Upper lobe of right lung (tissue), 1 donor: ENCODE measurements at regions of chr3 and their contacts with region 1.

Region 1: GRCh38 chr3:113287803-113288648 is 76.7 kb downstream of the BOC start:
- DNase-seq: no peak
- ATAC-seq: peak; percentile 76
- H3K4me3 ChIP-seq: no peak overlapping the region
- H3K27ac ChIP-seq: no peak overlapping the region
- H3K4me1 ChIP-seq: no peaks in the 10 kb centered on the region
- H3K27me3 ChIP-seq: no peaks in the 10 kb centered on the region
- CTCF ChIP-seq: peak; percentile 99

Region 2: GRCh38 chr3:113051302-113051711 is 236.7 kb before region 1 on chr3:
- intact Hi-C with region 1: loop called (anchors 10 kb)
- DNase-seq: peak; percentile 71
- ATAC-seq: peak; percentile 97
- H3K4me3 ChIP-seq: no peak overlapping the region
- H3K27ac ChIP-seq: no peak overlapping the region
- H3K4me1 ChIP-seq: peaks cover 17% of the 10 kb centered on the region
- H3K27me3 ChIP-seq: no peaks in the 10 kb centered on the region
- CTCF ChIP-seq: peak; percentile 96

Region 3: DNA sequence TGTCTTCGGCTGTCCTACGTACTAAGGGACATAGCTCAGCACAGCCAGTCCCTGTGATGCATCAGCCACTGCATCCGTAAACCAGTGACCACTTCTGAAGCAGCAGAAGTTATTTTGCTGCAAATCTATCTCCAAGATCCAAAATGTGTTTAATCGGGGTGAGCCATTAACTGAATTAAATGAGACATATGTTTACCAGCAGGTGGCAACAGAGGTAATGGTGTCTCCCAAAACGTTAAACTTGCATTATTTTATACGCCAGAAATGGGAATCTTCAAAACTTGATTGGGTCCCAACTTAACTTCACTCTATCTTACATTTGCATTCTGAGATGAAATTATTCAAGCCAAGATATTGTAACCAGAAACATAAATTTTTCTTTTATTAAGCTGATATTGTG is 152.0 kb before region 1 on chr3:
- intact Hi-C with region 1: loop called (anchors 5 kb)
- DNase-seq: no peak
- ATAC-seq: no peak
- H3K4me3 ChIP-seq: no peak overlapping the region
- H3K27ac ChIP-seq: no peak overlapping the region
- H3K4me1 ChIP-seq: no peaks in the 10 kb centered on the region
- H3K27me3 ChIP-seq: no peaks in the 10 kb centered on the region
- CTCF ChIP-seq: peak; percentile 51

Region 4: DNA sequence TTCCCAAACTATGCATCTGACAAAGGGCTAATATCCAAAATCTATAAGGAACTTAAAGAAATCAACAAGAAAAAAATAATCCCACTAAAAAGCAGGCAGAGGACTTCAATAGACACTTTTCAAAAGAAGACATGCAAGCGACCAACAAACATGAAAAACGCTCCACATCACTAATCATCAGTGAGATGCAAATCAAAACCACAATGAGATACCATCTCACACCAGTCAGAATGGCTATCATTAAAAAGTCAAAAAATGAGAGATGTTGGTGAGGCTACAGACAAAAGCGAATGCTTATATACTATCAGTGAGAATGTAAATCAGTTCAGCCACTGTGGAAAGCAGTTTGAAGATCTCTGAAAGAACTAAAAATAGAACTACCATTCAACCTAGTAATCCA is 133.1 kb after region 1 on chr3:
- intact Hi-C with region 1: no loop called
- DNase-seq: no peak
- ATAC-seq: no peak
- H3K4me3 ChIP-seq: no peak overlapping the region
- H3K27ac ChIP-seq: no peak overlapping the region
- H3K4me1 ChIP-seq: no peaks in the 10 kb centered on the region
- H3K27me3 ChIP-seq: no peaks in the 10 kb centered on the region
- CTCF ChIP-seq: no peak